ENCODE measurements at regions of chr5 and their contacts with region 1.

Region 1: GRCh38 chr5:172714491-172715421 is 56.2 kb downstream of the DUSP1 start:
- DNase-seq: peak; percentile 54
- ATAC-seq: peak; percentile 82
- H3K4me3 Mint-ChIP-seq: no peak overlapping the region
- H3K27ac Mint-ChIP-seq: no peak overlapping the region
- H3K4me1 Mint-ChIP-seq: peaks cover 8% of the 10 kb centered on the region
- H3K27me3 Mint-ChIP-seq: peaks cover 15% of the 10 kb centered on the region
- CTCF ChIP-seq: peak; percentile 48

Region 2: DNA sequence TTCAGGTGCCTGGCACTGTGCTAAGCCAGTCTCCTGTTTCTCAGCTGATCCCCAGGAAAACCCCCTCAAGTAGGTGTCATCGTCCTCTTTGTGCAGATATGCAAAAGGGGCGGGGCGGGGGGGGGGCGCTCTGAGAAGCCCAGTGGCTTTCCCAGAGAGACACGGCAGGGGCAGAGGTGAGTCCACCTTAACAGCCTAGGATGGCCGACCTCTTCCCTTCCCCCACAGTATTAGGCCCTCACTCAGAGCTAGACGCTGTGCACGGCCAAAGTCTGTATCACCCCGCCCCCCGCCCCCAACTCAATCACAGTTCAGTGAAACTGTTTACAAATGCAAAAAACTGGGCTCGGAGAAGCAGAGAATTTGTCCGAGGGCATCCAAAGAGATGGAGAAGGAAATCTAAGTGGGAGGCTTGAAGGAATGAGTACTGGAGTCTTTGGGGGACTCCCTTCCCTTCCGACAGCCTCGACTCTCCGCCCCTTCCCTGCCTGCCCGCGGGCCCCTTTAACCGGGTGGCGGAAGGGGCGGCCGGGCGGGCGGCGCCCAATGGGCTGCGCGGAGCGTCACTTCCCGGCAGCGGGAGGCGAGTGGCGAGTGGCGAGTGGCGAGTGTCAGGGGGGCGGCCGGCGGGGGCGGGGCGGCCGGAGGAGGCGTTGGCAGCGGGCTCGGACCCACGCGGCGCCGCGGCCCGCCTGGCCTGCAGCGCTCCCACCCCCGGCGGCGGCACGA is 119.1 kb after region 1 on chr5 and contains the start of gene ERGIC1:
- CTCF ChIA-PET with region 1: interaction called, 4 read pairs
- POLR2A ChIA-PET with region 1: interaction called, 3 read pairs
- intact Hi-C with region 1: loop called (anchors 5 kb)
- DNase-seq: peak; percentile 79
- ATAC-seq: peak; percentile 78
- H3K4me3 Mint-ChIP-seq: peak within 1 kb of the TSS; percentile 89
- H3K27ac Mint-ChIP-seq: peak within 1 kb of the TSS; percentile 92
- H3K4me1 Mint-ChIP-seq: peaks cover 48% of the 10 kb centered on the region
- H3K27me3 Mint-ChIP-seq: no peaks in the 10 kb centered on the region
- CTCF ChIP-seq: no peak
- total RNA-seq, gene ERGIC1: 69.6 and 72.5 TPM in 2 replicates

Region 3: GRCh38 chr5:172910828-172911627 is 196.3 kb after region 1 on chr5:
- CTCF ChIA-PET with region 1: interaction called, 7 read pairs
- POLR2A ChIA-PET with region 1: no interaction called
- intact Hi-C with region 1: loop called (anchors 1 kb)
- DNase-seq: peak; percentile 23
- ATAC-seq: peak; percentile 76
- H3K4me3 Mint-ChIP-seq: peak overlapping the region; percentile 25
- H3K27ac Mint-ChIP-seq: peak overlapping the region; percentile 86
- H3K4me1 Mint-ChIP-seq: peaks cover 25% of the 10 kb centered on the region
- H3K27me3 Mint-ChIP-seq: no peaks in the 10 kb centered on the region
- CTCF ChIP-seq: no peak

Region 4: GRCh38 chr5:172958331-172959046 is 243.7 kb after region 1 on chr5:
- CTCF ChIA-PET with region 1: interaction called, 4 read pairs
- POLR2A ChIA-PET with region 1: no interaction called
- intact Hi-C with region 1: loop called (anchors 1 kb)
- DNase-seq: peak; percentile 64
- ATAC-seq: peak; percentile 76
- H3K4me3 Mint-ChIP-seq: peak overlapping the region; percentile 97
- H3K27ac Mint-ChIP-seq: peak overlapping the region; percentile 94
- H3K4me1 Mint-ChIP-seq: peaks cover 31% of the 10 kb centered on the region
- H3K27me3 Mint-ChIP-seq: no peaks in the 10 kb centered on the region
- CTCF ChIP-seq: no peak

Region 5: GRCh38 chr5:173204185-173204979 is 489.6 kb after region 1 on chr5:
- CTCF ChIA-PET with region 1: no interaction called
- POLR2A ChIA-PET with region 1: no interaction called
- intact Hi-C with region 1: loop called (anchors 2 kb)
- DNase-seq: no peak
- ATAC-seq: no peak
- H3K4me3 Mint-ChIP-seq: no peak overlapping the region
- H3K27ac Mint-ChIP-seq: no peak overlapping the region
- H3K4me1 Mint-ChIP-seq: no peaks in the 10 kb centered on the region
- H3K27me3 Mint-ChIP-seq: peaks cover 24% of the 10 kb centered on the region
- CTCF ChIP-seq: no peak

Region 6: DNA sequence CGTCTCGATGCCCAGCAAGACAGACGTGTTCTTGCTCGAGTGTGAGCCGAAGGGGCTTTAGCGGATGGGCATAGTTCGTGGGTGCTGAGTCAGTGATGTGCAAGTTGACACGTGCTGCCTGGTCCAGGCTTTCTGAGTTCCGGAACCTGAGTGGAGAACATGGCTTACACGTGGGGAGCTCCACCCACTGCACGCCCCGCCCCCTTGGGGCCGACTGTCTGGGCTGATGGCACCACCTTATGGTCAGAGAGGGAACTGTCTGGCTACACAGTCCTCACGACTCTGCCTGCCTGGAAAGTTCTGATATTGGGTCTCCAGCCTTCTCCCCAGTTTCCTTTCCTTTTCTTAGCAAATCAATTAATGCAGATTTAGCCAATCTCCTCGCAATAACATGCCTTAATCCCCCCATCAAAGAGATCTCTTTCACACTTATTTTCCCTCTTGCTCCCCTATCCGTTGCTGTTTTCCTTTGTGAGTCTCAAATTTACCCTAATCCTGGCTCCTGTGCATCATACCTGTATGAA is 617.3 kb after region 1 on chr5:
- CTCF ChIA-PET with region 1: interaction called, 5 read pairs
- POLR2A ChIA-PET with region 1: no interaction called
- intact Hi-C with region 1: loop called (anchors 5 kb)
- DNase-seq: peak; percentile 36
- ATAC-seq: peak; percentile 73
- H3K4me3 Mint-ChIP-seq: no peak overlapping the region
- H3K27ac Mint-ChIP-seq: no peak overlapping the region
- H3K4me1 Mint-ChIP-seq: peaks cover 12% of the 10 kb centered on the region
- H3K27me3 Mint-ChIP-seq: peaks cover 50% of the 10 kb centered on the region
- CTCF ChIP-seq: no peak

Measured in activated B cell treated with CpG ODN at 0.5 μM for 24 hours (primary cell).